ENCODE measurements at regions of chr12 and their contacts with region 1.

Region 1: GRCh38 chr12:105084251-105085250 is at the start of gene ALDH1L2:
- DNase-seq: peak; percentile 86 to 87
- H3K4me3 ChIP-seq: peak within 1 kb of the TSS; percentile 51
- H3K4me3 Mint-ChIP-seq: peak within 1 kb of the TSS; percentile 76
- H3K27ac Mint-ChIP-seq: peak within 1 kb of the TSS; percentile 62
- H3K4me1 ChIP-seq: peaks cover 6% of the 10 kb centered on the region; the same call in 1 of the 2 replicates
- H3K4me1 Mint-ChIP-seq: peaks cover 6% of the 10 kb centered on the region
- H3K27me3 ChIP-seq: no peaks in the 10 kb centered on the region
- H3K27me3 Mint-ChIP-seq: no peaks in the 10 kb centered on the region
- CTCF ChIP-seq: no peak
- total RNA-seq, gene ALDH1L2: 20.3 and 26.1 TPM in 2 replicates

Region 2: DNA sequence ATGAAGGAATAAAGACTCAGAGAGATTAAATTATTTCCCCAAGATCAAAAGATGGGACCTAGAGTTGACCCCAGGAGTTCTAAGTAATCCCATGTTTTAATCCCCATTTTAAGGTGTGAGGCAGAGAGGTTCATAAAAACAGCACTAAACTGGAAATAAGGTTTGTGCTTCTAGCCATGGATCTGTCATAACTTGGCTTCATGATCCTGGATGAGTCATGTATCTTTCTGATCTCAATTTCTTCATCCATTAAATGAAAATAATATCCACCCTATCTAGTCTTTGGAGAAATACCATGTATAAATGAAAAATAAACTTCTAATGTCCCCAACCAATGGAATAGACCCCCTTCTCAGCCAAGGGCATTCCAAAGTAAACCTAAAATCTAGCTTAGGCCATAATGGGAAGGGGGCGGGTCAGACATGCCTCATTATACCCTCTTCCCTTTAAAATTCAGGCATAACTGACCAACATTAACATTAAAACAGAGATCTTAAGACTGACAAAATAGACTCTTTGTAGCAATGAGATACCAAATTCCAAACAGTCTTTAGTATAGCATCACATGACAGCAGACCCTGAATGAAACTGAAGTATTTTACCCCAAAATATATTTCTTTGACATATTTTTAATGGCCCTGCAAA is 174.2 kb before region 1 on chr12:
- CTCF ChIA-PET with region 1: no interaction called
- POLR2A ChIA-PET with region 1: no interaction called
- intact Hi-C with region 1: no loop called
- DNase-seq: no peak
- H3K4me3 ChIP-seq: no peak overlapping the region
- H3K4me3 Mint-ChIP-seq: no peak overlapping the region
- H3K27ac Mint-ChIP-seq: no peak overlapping the region
- H3K4me1 ChIP-seq: no peaks in the 10 kb centered on the region
- H3K4me1 Mint-ChIP-seq: no peaks in the 10 kb centered on the region
- H3K27me3 ChIP-seq: no peaks in the 10 kb centered on the region
- H3K27me3 Mint-ChIP-seq: no peaks in the 10 kb centered on the region
- CTCF ChIP-seq: no peak

Region 3: GRCh38 chr12:105107494-105108371 is 23.2 kb after region 1 on chr12 and contains the start of gene WASHC4:
- CTCF ChIA-PET with region 1: no interaction called
- POLR2A ChIA-PET with region 1: interaction called, 4 read pairs
- intact Hi-C with region 1: loop called (anchors 1 kb)
- DNase-seq: peak; percentile 93 to 96
- H3K4me3 ChIP-seq: peak within 1 kb of the TSS; percentile 100
- H3K4me3 Mint-ChIP-seq: peak within 1 kb of the TSS; percentile 95
- H3K27ac Mint-ChIP-seq: peak within 1 kb of the TSS; percentile 93
- H3K4me1 ChIP-seq: peaks cover 4% of the 10 kb centered on the region; the same call in 1 of the 2 replicates
- H3K4me1 Mint-ChIP-seq: peaks cover 12% of the 10 kb centered on the region
- H3K27me3 ChIP-seq: no peaks in the 10 kb centered on the region
- H3K27me3 Mint-ChIP-seq: no peaks in the 10 kb centered on the region
- CTCF ChIP-seq: no peak
- total RNA-seq, gene WASHC4: 41.0 and 43.5 TPM in 2 replicates

Region 4: GRCh38 chr12:105164068-105164467 is 79.5 kb after region 1 on chr12:
- CTCF ChIA-PET with region 1: no interaction called
- POLR2A ChIA-PET with region 1: no interaction called
- intact Hi-C with region 1: no loop called
- DNase-seq: no peak
- H3K4me3 ChIP-seq: no peak overlapping the region
- H3K4me3 Mint-ChIP-seq: no peak overlapping the region
- H3K27ac Mint-ChIP-seq: no peak overlapping the region
- H3K4me1 ChIP-seq: no peaks in the 10 kb centered on the region
- H3K4me1 Mint-ChIP-seq: peaks cover 4% of the 10 kb centered on the region
- H3K27me3 ChIP-seq: no peaks in the 10 kb centered on the region
- H3K27me3 Mint-ChIP-seq: no peaks in the 10 kb centered on the region
- CTCF ChIP-seq: no peak